Ascending aorta (tissue), 2 donors: ENCODE measurements at regions of chr2 and their contacts with region 1.

Region 1: DNA sequence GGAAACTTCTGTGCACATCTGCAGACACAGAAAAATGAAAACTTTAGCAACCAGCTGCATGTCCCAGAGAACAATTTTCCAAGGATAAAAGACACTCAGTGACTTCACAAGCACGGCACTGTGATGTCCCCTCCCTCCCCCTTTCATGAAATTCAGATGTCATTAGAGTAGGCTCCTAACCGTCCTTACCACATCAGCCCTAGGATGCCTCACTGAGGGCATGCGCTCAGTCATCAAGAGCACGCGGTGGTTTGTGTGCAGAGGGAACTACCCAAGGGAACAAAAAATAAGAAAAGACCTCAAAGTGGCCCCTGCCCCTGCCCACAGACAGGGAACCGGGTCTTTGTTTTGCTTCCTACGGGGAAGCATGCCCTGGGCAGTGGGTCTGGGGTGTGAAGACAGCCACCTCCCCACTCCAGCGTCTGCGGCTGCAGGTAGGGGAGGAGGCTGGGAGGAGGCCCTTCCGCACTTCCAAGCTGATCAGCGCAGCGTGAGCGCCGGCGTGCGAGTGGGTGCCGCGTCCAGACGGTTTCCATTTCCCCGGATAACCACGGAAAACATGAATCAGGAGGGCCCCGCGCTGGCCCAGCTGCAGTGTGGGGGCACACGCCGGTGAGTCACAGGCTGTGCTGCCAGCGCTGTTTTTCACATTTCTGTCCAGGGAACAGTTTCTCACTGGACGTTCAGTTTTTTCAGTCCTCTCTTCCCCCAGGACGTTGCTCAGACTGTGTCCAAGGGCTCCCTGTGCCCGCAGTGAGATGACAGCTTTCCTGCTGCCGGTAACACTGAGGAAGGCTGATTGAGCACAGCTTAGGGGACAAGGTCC is 70.6 kb downstream of the COPS8 start:
- DNase-seq: peak; percentile 38 to 87
- H3K4me3 ChIP-seq: peak overlapping the region; percentile 23 to 44
- H3K27ac ChIP-seq: peak overlapping the region; percentile 54 to 74
- H3K4me1 ChIP-seq: peaks cover 5 to 14% of the 10 kb centered on the region in 2 donors
- H3K27me3 ChIP-seq: no peaks in the 10 kb centered on the region
- CTCF ChIP-seq: no peak

Region 2: GRCh38 chr2:236824877-236825692 is 331.2 kb before region 1 on chr2:
- intact Hi-C with region 1: no loop called
- DNase-seq: no peak
- H3K4me3 ChIP-seq: no peak overlapping the region
- H3K27ac ChIP-seq: no peak overlapping the region
- H3K4me1 ChIP-seq: no peaks in the 10 kb centered on the region
- H3K27me3 ChIP-seq: no peaks in the 10 kb centered on the region
- CTCF ChIP-seq: no peak

Region 3: DNA sequence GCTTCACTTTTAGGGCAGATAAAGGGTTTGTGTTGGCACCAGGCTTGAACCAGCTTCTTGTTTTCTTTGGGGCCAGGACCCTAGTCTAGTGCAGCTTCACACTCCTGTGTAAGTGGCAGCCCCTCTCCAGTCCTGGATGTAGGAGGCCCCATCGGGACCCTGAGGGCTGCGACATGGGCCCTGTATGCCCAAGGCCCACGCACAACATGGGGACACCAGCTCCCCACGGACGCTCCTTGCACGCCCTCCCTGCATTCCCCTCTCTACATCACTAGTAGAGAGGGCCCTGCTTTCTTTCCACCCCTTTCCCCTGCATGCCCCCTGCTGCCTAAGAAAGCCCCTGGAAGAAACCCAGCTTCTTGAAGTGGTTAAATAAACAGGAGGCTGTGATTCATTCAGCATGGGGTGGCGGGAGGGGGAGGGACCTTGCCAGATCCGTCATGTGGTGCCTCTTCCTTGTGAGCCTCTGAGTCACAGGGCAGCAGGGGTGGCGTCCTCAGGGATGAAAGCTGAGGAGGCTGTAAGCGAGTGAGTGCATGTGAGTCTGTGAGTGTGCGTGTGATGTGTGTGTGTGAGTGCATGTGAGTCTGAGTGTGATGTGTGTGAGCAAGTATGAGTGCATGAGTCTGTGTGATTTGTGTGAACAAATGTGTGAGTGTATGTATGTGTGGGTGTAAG is 28.1 kb before region 1 on chr2:
- intact Hi-C with region 1: loop called (anchors 2 kb)
- DNase-seq: peak; percentile 86 to 96
- H3K4me3 ChIP-seq: no peak overlapping the region
- H3K27ac ChIP-seq: peak overlapping the region in 1 of 2 donors; percentile 47
- H3K4me1 ChIP-seq: peaks cover 0 to 9% of the 10 kb centered on the region in 2 donors
- H3K27me3 ChIP-seq: no peaks in the 10 kb centered on the region
- CTCF ChIP-seq: peak in 1 of 3 experiments; percentile 12

Region 4: DNA sequence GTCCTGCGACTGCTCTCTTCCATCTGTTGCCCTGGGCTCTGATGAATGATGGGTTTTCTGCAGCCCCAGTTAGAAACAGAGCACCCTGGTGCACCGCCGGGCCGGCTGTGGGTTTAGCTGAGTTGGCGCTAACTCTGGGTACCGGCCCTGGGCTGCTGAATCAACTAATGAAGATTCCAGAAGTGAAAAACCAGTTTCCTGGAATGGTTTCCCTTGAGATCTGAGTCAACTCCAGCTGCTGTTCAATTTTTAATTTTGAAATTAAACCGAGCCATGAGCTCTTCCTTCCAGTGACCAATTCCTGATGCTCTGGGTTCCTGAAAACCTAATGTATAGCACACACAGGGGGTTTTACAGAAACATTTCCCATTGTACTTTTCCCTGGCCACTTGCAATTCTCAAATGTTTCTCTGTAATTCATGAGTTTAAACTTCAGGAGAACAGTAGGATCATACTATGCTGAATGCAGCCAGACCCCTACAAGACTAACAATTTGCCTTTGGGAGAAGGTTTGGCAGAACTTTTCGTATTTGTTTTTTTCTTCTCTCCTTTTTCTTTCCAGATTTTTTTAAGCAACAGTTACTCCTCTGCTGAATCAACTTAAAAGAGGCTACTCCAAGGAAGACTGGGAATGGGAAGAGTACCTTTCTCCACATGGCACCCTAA is 252.2 kb after region 1 on chr2:
- intact Hi-C with region 1: loop called (anchors 5 kb)
- DNase-seq: no peak
- H3K4me3 ChIP-seq: no peak overlapping the region
- H3K27ac ChIP-seq: peak overlapping the region; percentile 62
- H3K4me1 ChIP-seq: peaks cover 9 to 24% of the 10 kb centered on the region in 2 donors
- H3K27me3 ChIP-seq: no peaks in the 10 kb centered on the region
- CTCF ChIP-seq: no peak